ENCODE measurements at regions of chrX and their contacts with region 1.

Region 1: DNA sequence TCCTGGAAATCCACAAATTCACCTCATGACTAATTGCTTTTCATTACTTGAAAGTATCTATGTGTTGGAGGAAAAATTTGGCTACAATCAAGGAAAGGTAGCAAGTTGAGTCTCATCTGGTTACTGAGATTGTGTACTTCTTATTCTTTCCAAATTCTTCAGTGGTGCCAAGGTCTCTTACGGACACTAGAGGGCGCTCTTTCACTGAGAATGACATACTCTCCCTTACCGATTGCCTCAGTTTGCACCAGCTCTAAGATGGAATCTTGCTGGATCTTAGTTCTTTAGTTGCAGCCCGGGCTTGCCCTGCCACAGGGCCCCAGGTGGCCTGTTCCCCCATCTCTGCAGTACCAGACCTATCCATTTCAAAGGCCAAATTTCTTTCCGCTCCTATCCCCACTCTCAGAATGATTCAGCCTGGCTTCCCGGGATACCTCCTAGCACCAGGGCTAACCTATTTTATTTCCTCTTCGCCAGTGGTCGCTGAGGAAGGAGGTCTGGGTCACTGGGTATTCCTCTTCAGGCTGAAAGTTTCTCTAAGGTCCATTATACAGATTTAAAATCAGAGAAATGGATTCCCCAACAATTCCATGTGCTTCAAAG is 24.6 kb upstream of the GPR50 start:
- DNase-seq: peak; percentile 45
- H3K4me3 Mint-ChIP-seq: no peak overlapping the region
- H3K27ac Mint-ChIP-seq: no peak overlapping the region
- H3K4me1 Mint-ChIP-seq: no peaks in the 10 kb centered on the region
- H3K27me3 Mint-ChIP-seq: peaks cover 10% of the 10 kb centered on the region

Region 2: DNA sequence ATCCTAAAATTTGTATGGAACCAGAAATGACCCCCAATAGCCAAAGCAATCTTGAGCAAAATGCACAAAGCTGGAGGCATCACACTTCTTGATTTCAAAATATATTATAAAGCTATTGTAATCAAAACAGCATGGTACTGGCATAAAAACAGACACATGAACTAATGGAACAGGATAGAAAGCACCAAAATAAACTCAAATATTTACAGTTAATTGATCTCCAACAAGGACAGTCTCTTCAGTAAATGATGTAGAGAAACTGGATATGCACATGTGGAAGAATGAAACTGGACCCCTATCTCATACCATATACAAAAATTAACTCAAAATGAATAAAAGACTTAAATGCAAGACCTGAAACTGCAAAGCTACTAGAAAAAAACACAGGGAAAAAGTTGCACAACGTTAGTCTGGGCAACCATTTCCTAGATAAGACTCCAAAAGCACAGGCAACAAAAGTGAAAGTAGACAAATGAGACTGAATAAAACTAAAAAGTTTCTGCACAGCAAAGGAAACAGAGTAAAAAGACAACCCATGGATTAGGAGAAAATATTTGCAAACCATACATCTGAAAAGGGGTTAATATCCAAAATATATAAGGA is 318.2 kb before region 1 on chrX:
- CTCF ChIA-PET with region 1: no interaction called
- intact Hi-C with region 1: no loop called
- DNase-seq: no peak
- H3K4me3 Mint-ChIP-seq: no peak overlapping the region
- H3K27ac Mint-ChIP-seq: no peak overlapping the region
- H3K4me1 Mint-ChIP-seq: peaks cover 2% of the 10 kb centered on the region
- H3K27me3 Mint-ChIP-seq: no peaks in the 10 kb centered on the region

Region 3: DNA sequence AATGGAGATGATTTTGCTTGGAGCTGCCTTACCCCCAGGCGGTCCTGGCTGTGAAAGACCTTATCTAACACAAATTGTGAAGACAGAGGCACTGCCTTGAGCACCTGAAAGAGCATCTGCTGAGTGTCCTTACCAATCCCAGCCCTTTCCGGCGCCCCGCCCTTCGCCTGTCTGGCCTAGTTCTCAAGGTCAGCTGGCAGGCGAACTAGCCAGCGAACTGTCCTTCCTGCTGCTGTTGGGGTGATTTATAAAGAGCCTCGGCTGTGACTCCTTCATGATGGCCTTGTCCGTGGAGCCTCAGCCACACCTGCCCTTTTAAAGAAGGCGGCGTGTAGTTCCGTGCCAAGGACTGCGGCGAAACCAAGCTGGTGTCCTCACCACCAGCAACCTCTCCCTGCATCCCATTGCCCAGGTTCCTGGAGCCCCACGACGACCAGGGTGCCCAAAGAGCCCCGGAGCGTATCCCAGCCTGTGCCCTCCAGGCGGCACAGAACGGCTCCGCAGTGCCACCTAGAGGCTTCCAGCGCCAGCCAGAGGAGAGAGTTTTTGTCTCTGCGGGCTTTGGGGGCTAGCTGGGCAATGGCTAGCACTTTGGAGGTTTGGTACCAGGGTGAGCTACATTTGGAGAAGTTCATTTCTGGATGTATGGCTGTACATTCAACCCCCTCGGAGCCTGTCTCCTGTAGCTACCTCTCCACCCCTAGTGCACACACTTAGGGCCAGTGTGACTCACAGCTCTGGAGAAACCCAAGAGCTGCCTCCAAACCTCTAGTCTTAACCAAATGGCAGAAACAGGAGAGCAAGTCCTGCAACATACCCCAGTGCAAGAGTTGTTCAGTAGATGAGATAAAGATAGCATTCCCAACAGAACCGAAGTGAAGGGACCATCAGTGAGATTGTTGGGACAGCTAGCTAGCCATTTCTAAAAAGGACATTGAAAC is 208.4 kb after region 1 on chrX:
- CTCF ChIA-PET with region 1: interaction called, 20 read pairs
- intact Hi-C with region 1: loop called (anchors 1 kb)
- DNase-seq: peak; percentile 46
- H3K4me3 Mint-ChIP-seq: no peak overlapping the region
- H3K27ac Mint-ChIP-seq: no peak overlapping the region
- H3K4me1 Mint-ChIP-seq: no peaks in the 10 kb centered on the region
- H3K27me3 Mint-ChIP-seq: peaks cover 8% of the 10 kb centered on the region

Region 4: DNA sequence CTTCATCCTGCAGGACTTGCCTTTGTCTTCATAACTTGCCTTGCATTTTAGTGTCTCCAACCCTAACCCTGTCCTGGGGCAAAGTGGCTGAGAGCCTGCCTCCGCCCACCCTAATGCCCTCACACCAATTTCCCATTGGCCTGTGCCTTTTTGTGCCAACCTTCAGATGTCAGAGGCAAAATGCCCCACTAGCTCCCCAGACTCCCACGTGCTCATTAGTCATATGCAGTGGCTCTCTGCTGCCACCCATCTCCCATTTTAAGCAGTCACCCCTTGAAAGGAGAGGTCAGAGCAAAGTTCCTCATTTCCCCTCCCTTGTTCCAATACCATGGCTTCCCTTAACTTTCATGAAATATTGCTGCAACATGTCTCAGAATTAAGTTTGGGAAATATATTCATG is 336.9 kb after region 1 on chrX:
- CTCF ChIA-PET with region 1: interaction called, 3 read pairs
- intact Hi-C with region 1: loop called (anchors 1 kb)
- DNase-seq: peak; percentile 32
- H3K4me3 Mint-ChIP-seq: no peak overlapping the region
- H3K27ac Mint-ChIP-seq: no peak overlapping the region
- H3K4me1 Mint-ChIP-seq: no peaks in the 10 kb centered on the region
- H3K27me3 Mint-ChIP-seq: no peaks in the 10 kb centered on the region

Region 5: DNA sequence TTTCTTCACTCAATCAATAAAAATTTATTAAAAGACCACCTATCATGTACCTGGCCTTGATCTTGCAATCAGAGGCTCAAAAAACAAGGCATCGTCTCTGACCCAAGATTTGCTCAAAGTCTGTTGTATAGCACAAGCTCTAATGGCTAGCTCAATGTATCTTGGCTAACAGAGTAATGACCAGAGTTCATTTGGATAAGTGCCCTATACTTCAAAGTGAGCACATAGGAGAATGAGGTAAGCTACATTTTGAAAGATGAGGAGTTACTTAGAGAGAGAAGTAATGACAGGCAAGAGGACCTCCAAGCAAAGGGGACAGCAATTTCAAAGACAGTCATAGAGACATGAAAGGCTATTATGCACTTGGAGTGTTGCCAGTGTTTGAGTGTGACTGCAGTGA is 1463.0 kb after region 1 on chrX:
- CTCF ChIA-PET with region 1: no interaction called
- intact Hi-C with region 1: no loop called
- DNase-seq: no peak
- H3K4me3 Mint-ChIP-seq: no peak overlapping the region
- H3K27ac Mint-ChIP-seq: no peak overlapping the region
- H3K4me1 Mint-ChIP-seq: no peaks in the 10 kb centered on the region
- H3K27me3 Mint-ChIP-seq: peaks cover 7% of the 10 kb centered on the region

Measured in activated naive CD4-positive, alpha-beta T cell treated with anti-CD3 and anti-CD28 coated beads for 36 hours (primary cell).